MCF 10A (cell line): ENCODE measurements at regions of chr2 and their contacts with region 1.

Region 1: DNA sequence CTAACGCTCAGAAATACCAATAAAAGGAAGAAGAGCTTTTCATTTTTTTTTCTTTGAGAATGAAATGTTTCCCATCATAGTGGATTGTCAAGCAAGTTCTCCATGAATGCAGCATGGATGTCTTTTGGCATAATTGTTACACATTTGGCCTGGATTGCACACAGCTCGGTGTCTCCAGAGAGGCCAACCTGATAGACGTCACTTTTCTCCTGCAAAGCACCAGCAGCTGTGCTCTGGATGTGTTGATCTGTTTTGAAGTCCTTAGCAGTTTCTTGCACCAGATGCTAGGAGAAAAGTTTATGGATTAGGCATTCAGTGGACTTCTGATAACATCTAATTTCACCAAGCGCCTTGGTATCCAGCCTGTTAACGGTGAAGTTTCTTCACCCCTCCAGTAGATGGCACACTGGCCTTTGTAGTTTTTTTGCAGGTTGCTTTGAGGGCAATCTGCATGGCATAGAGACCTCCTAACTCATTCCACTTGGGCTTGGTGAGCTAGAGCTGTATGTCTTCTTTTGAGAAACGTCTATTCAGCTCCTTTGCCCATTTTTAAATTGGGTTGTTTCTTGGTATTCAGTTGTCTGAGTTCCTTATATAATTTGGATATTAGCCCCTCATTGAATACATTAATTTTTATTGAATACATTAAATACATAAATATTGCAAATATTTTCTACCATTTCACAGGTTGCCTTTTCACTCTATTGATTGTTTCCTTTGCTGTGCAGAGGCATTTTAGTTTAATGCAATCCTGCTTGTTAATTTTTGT is 59.7 kb downstream of the PTH2R start:
- DNase-seq: peak; percentile 68
- H3K4me3 Mint-ChIP-seq: no peak overlapping the region
- H3K27ac Mint-ChIP-seq: no peak overlapping the region
- H3K4me1 Mint-ChIP-seq: no peaks in the 10 kb centered on the region
- H3K27me3 Mint-ChIP-seq: peaks cover 21% of the 10 kb centered on the region
- CTCF ChIP-seq: peak; percentile 75

Region 2: DNA sequence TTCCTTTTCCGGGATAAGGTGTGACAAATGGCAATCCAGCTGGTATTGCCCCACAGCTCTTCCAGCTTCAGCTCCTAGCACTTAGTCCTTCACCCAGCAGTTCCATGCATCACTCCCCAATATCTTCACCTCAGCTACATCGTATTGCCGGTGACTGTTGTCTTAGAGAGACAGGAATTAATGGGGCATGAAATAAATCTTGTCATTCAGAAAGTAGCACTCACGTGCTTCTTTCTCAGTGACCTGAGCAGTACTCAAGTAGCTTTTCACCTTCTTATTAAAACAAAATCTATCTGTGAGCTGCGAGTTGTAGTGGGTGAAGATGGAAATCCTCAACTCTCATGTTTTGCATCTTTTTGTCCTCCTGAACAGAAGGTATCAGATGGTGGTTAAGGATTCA is 13.0 kb after region 1 on chr2:
- CTCF ChIA-PET with region 1: interaction called, 10 read pairs
- POLR2A ChIA-PET with region 1: no interaction called
- intact Hi-C with region 1: no loop called
- DNase-seq: no peak
- H3K4me3 Mint-ChIP-seq: no peak overlapping the region
- H3K27ac Mint-ChIP-seq: no peak overlapping the region
- H3K4me1 Mint-ChIP-seq: no peaks in the 10 kb centered on the region
- H3K27me3 Mint-ChIP-seq: no peaks in the 10 kb centered on the region
- CTCF ChIP-seq: no peak

Region 3: GRCh38 chr2:208783187-208783586 is 316.9 kb after region 1 on chr2:
- CTCF ChIA-PET with region 1: interaction called, 5 read pairs
- POLR2A ChIA-PET with region 1: no interaction called
- intact Hi-C with region 1: loop called (anchors 1 kb)
- DNase-seq: peak; percentile 34
- H3K4me3 Mint-ChIP-seq: no peak overlapping the region
- H3K27ac Mint-ChIP-seq: no peak overlapping the region
- H3K4me1 Mint-ChIP-seq: peaks cover 11% of the 10 kb centered on the region
- H3K27me3 Mint-ChIP-seq: no peaks in the 10 kb centered on the region
- CTCF ChIP-seq: peak; percentile 20

Region 4: DNA sequence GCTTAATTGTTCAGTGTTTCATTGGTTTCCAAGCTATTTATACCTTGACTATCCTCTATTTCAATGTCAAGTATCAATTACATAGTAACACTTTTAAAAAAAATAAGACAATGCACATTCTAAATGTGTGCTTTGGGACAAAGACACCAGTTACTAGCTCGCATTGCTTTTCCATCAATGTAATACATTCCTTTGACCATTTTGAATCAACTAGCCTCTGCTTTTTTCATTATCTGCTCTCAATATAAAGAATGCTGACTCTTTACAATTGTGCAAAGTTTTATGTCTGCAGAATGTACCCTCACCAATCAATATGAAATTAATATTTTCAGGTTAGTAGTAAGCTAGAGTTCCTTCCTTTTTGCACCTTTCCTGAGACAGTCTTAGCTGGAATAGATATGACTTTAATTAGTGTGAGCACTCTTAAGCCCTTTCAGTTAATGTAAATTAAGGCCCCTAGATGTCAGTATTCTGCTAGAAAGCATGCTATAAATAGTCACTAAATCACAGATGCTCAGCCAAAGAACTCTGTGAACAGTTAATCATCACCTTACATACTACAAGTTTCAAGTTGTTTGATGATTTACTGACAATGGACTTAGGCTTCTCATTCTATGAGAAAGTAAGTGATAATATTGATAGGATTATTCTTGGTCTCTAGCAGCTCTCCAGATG is 353.8 kb after region 1 on chr2:
- CTCF ChIA-PET with region 1: interaction called, 12 read pairs
- POLR2A ChIA-PET with region 1: no interaction called
- intact Hi-C with region 1: no loop called
- DNase-seq: peak; percentile 18
- H3K4me3 Mint-ChIP-seq: no peak overlapping the region
- H3K27ac Mint-ChIP-seq: no peak overlapping the region
- H3K4me1 Mint-ChIP-seq: no peaks in the 10 kb centered on the region
- H3K27me3 Mint-ChIP-seq: peaks cover 12% of the 10 kb centered on the region
- CTCF ChIP-seq: peak; percentile 30